Activated B cell treated with CpG ODN at 0.5 μM for 24 hours (primary cell): ENCODE measurements at regions of chrX and their contacts with region 1.

Region 1: DNA sequence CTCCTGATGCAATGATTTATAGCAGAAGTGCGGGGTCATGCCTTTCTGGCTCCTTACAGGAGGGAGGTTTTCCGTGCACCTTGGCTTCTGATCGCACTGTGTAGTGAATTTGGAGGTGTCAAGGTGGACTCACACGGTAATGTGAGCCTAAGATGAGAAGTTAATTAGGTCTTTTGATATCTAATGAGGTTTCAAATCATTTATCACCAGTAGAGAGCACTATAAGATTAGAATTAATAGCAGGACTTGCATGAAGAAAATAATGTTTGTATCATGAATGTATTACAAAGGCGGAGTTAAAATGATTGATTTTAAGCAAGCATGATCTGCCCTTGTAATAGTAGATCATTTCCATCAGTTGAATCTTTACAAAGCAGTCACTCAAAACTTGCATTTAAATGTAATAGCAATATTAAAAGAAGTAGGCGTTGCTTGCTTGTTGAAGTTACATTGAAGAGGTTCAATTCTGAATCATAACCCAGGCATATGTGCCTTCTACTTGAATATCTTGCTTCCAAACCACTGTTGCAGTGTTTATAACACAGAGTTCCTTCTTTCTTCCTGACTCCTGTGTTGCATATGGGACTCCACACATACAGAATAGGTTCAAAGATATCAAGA is 152.1 kb downstream of the FMR1NB start:
- DNase-seq: no peak
- ATAC-seq: no peak
- H3K4me3 Mint-ChIP-seq: no peak overlapping the region
- H3K27ac Mint-ChIP-seq: no peak overlapping the region
- H3K4me1 Mint-ChIP-seq: no peaks in the 10 kb centered on the region
- H3K27me3 Mint-ChIP-seq: no peaks in the 10 kb centered on the region
- CTCF ChIP-seq: no peak

Region 2: GRCh38 chrX:146921204-146921603 is 1212.0 kb before region 1 on chrX:
- CTCF ChIA-PET with region 1: no interaction called
- POLR2A ChIA-PET with region 1: no interaction called
- intact Hi-C with region 1: no loop called
- DNase-seq: no peak
- ATAC-seq: no peak
- H3K4me3 Mint-ChIP-seq: no peak overlapping the region
- H3K27ac Mint-ChIP-seq: no peak overlapping the region
- H3K4me1 Mint-ChIP-seq: no peaks in the 10 kb centered on the region
- H3K27me3 Mint-ChIP-seq: no peaks in the 10 kb centered on the region
- CTCF ChIP-seq: no peak

Region 3: GRCh38 chrX:147710301-147710700 is 422.9 kb before region 1 on chrX:
- CTCF ChIA-PET with region 1: no interaction called
- POLR2A ChIA-PET with region 1: no interaction called
- intact Hi-C with region 1: no loop called
- DNase-seq: no peak
- ATAC-seq: no peak
- H3K4me3 Mint-ChIP-seq: no peak overlapping the region
- H3K27ac Mint-ChIP-seq: no peak overlapping the region
- H3K4me1 Mint-ChIP-seq: no peaks in the 10 kb centered on the region
- H3K27me3 Mint-ChIP-seq: no peaks in the 10 kb centered on the region
- CTCF ChIP-seq: no peak

Region 4: DNA sequence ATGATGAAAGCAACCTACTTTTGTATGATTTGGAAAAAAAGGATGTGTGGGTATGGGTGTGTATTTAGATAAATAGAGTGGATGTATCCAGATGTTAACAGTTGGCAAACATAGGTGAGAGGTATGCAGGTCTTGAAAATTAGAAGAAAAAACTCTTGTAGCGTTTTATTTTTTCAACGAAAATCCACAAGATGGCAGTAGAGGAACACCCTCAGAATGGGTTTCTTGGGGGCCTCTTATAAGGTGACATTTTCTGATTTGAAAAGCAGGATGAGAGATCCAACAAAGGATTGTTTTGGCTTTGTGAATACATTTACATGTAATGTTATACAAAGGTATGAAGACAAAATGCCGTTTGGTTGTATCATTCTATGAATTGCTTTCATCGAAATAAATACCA is 83.8 kb before region 1 on chrX:
- CTCF ChIA-PET with region 1: no interaction called
- POLR2A ChIA-PET with region 1: no interaction called
- intact Hi-C with region 1: loop called (anchors 5 kb)
- DNase-seq: no peak
- ATAC-seq: no peak
- H3K4me3 Mint-ChIP-seq: no peak overlapping the region
- H3K27ac Mint-ChIP-seq: no peak overlapping the region
- H3K4me1 Mint-ChIP-seq: no peaks in the 10 kb centered on the region
- H3K27me3 Mint-ChIP-seq: peaks cover 3% of the 10 kb centered on the region
- CTCF ChIP-seq: no peak

Region 5: DNA sequence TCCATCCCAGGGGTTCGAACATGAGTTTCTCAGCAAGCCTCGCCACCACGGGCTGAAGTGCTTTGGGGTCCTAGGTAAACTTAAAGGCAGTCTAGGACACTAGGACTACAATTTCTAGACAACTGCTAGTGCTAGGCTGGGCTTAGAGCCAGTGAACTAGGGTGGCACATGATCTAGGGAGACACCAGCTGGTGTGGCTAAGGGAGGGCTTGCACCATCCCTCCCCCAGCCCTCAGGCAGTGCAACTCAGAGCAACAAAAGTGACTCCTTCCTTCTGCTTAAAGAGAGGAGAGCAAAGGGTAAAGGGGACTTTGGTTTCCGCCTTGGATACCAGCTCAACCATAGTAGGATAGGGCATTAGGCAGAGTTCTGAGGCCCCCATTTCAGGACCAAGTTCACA is 204.7 kb after region 1 on chrX:
- CTCF ChIA-PET with region 1: no interaction called
- POLR2A ChIA-PET with region 1: no interaction called
- intact Hi-C with region 1: no loop called
- DNase-seq: no peak
- ATAC-seq: no peak
- H3K4me3 Mint-ChIP-seq: no peak overlapping the region
- H3K27ac Mint-ChIP-seq: no peak overlapping the region
- H3K4me1 Mint-ChIP-seq: peaks cover 10% of the 10 kb centered on the region
- H3K27me3 Mint-ChIP-seq: no peaks in the 10 kb centered on the region
- CTCF ChIP-seq: no peak

Region 6: DNA sequence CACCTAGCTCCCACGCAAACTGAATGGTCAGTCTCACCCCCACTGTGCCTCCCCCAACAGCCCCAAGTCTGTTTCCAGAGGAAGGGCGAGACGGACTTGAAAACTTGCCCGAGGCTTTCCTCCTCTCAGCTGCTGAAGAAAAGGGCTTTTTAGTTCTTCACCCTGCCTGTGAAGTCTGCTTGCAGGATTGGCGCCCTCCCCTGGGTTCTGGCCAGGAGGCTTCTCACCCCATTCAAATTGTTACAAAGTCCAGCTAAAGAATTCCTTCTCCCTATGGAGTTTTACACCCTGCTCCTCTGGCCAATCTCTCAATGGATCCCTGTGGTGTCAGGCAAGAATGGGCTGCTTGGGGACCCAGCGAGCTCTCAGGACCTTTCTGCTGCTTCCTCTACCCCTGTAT is 608.2 kb after region 1 on chrX:
- CTCF ChIA-PET with region 1: no interaction called
- POLR2A ChIA-PET with region 1: no interaction called
- intact Hi-C with region 1: loop called (anchors 1 kb)
- DNase-seq: no peak
- ATAC-seq: no peak
- H3K4me3 Mint-ChIP-seq: no peak overlapping the region
- H3K27ac Mint-ChIP-seq: no peak overlapping the region
- H3K4me1 Mint-ChIP-seq: peaks cover 12% of the 10 kb centered on the region
- H3K27me3 Mint-ChIP-seq: no peaks in the 10 kb centered on the region
- CTCF ChIP-seq: no peak

Region 7: GRCh38 chrX:149003863-149004660 is 870.8 kb after region 1 on chrX:
- CTCF ChIA-PET with region 1: no interaction called
- POLR2A ChIA-PET with region 1: no interaction called
- intact Hi-C with region 1: loop called (anchors 2 kb)
- DNase-seq: no peak
- ATAC-seq: no peak
- H3K4me3 Mint-ChIP-seq: no peak overlapping the region
- H3K27ac Mint-ChIP-seq: no peak overlapping the region
- H3K4me1 Mint-ChIP-seq: no peaks in the 10 kb centered on the region
- H3K27me3 Mint-ChIP-seq: no peaks in the 10 kb centered on the region
- CTCF ChIP-seq: no peak

Region 8: DNA sequence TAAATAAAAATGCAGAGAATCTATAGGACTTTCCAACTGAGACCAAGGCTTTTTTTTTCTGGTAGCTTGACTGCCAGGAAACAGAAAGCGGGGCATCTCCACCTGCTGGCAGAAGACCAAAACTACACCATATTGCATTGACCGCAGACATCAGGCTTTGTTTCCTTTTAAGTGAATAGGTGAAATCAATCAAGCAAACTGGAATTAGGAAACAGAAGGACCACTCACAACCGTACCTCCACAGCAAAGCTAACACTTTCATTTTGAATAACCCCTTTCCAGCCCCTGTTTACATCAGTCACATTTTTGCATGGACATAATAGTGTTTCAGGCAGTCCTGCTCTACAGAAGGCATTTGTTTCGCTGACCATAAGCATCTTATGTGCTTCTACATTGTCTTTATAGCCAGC is 1153.7 kb after region 1 on chrX:
- CTCF ChIA-PET with region 1: interaction called, 30 read pairs
- POLR2A ChIA-PET with region 1: no interaction called
- intact Hi-C with region 1: loop called (anchors 1 kb)
- DNase-seq: no peak
- ATAC-seq: no peak
- H3K4me3 Mint-ChIP-seq: no peak overlapping the region
- H3K27ac Mint-ChIP-seq: no peak overlapping the region
- H3K4me1 Mint-ChIP-seq: no peaks in the 10 kb centered on the region
- H3K27me3 Mint-ChIP-seq: peaks cover 2% of the 10 kb centered on the region
- CTCF ChIP-seq: no peak

Region 9: DNA sequence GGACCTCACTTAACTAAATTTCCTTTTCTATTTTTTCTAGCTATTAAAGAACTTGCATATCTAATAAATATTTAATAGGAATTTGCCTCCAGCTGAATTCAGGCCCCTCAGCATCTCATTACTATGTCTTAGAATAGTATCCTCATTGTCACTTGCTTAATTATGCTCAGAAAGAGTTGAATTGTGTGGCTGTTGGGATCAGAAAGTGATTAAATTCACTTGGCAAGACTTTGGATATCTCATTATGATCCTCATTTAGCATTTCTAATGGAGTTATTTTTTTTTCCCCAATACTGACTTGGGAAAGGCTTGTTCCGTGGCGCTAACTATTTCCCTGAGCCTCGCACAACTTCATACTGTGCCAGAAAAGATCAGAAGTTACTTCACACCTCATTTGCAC is 1213.1 kb after region 1 on chrX:
- CTCF ChIA-PET with region 1: no interaction called
- POLR2A ChIA-PET with region 1: no interaction called
- intact Hi-C with region 1: no loop called
- DNase-seq: no peak
- ATAC-seq: no peak
- H3K4me3 Mint-ChIP-seq: no peak overlapping the region
- H3K27ac Mint-ChIP-seq: no peak overlapping the region
- H3K4me1 Mint-ChIP-seq: no peaks in the 10 kb centered on the region
- H3K27me3 Mint-ChIP-seq: no peaks in the 10 kb centered on the region
- CTCF ChIP-seq: no peak

Region 10: GRCh38 chrX:149470955-149471354 is 1337.7 kb after region 1 on chrX:
- CTCF ChIA-PET with region 1: interaction called, 5 read pairs
- POLR2A ChIA-PET with region 1: no interaction called
- intact Hi-C with region 1: loop called (anchors 1 kb)
- DNase-seq: peak; percentile 34
- ATAC-seq: peak; percentile 70
- H3K4me3 Mint-ChIP-seq: no peak overlapping the region
- H3K27ac Mint-ChIP-seq: no peak overlapping the region
- H3K4me1 Mint-ChIP-seq: peaks cover 3% of the 10 kb centered on the region
- H3K27me3 Mint-ChIP-seq: peaks cover 3% of the 10 kb centered on the region
- CTCF ChIP-seq: no peak